ENCODE measurements at regions of chr9 and their contacts with region 1.

Region 1: GRCh38 chr9:70111042-70111602 is 67.5 kb downstream of the MAMDC2 start:
- DNase-seq: peak; percentile 78
- ATAC-seq: peak; percentile 55
- H3K4me3 Mint-ChIP-seq: no peak overlapping the region
- H3K27ac Mint-ChIP-seq: no peak overlapping the region
- H3K4me1 Mint-ChIP-seq: peaks cover 12% of the 10 kb centered on the region
- H3K27me3 Mint-ChIP-seq: peaks cover 13% of the 10 kb centered on the region

Region 2: DNA sequence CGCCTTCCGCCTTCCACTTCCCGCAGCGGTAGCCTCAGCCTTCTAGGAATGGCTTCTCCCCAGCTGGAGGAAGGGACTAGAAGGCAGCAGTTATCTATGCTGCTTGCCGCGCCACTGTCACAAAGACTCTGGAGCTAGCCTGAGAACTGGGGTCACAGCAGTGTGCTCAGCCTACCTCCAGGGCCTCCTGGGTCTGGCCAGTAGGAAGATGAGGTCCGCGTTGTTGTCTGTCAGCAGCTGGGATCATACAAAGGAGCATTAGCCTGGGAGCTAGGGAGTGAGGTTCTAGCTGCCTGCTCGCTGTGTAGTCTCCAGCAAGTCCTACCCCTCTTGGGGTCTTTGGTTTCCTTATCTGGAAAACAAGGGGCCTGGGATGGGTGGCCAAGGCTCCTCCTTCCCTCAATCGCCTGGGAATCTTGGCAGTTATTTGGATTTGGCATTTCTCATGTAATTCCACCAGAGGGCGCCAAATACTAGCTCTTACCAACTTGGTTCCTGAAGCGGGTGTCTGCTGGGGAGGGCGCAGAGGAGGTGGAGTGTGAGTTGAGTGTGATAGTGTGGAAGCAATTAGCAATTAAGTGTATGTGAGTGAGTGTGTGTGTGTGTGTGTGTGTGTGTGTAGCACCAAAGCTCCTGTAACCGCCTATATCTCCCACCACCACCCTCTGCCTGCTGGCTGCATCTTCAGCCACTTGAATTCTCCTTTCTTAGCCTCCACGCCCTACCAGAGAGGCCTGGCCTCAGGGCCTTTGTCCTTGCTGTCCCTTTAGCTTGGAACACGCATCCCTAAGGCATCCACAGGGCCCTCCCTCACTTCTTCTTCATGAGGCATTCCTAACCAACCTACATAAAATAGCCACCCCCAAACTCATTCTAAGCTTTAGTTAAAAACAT is 689.0 kb before region 1 on chr9:
- CTCF ChIA-PET with region 1: interaction called, 3 read pairs
- POLR2A ChIA-PET with region 1: no interaction called
- intact Hi-C with region 1: loop called in 1 of 2 experiments (anchors 5 kb)
- DNase-seq: peak; percentile 65
- ATAC-seq: peak; percentile 50
- H3K4me3 Mint-ChIP-seq: no peak overlapping the region
- H3K27ac Mint-ChIP-seq: no peak overlapping the region
- H3K4me1 Mint-ChIP-seq: no peaks in the 10 kb centered on the region
- H3K27me3 Mint-ChIP-seq: peaks cover 17% of the 10 kb centered on the region

Region 3: GRCh38 chr9:69949396-69949795 is 161.7 kb before region 1 on chr9:
- CTCF ChIA-PET with region 1: no interaction called
- POLR2A ChIA-PET with region 1: no interaction called
- intact Hi-C with region 1: no loop called
- DNase-seq: no peak
- ATAC-seq: no peak
- H3K4me3 Mint-ChIP-seq: no peak overlapping the region
- H3K27ac Mint-ChIP-seq: no peak overlapping the region
- H3K4me1 Mint-ChIP-seq: no peaks in the 10 kb centered on the region
- H3K27me3 Mint-ChIP-seq: peaks cover 28% of the 10 kb centered on the region

Region 4: DNA sequence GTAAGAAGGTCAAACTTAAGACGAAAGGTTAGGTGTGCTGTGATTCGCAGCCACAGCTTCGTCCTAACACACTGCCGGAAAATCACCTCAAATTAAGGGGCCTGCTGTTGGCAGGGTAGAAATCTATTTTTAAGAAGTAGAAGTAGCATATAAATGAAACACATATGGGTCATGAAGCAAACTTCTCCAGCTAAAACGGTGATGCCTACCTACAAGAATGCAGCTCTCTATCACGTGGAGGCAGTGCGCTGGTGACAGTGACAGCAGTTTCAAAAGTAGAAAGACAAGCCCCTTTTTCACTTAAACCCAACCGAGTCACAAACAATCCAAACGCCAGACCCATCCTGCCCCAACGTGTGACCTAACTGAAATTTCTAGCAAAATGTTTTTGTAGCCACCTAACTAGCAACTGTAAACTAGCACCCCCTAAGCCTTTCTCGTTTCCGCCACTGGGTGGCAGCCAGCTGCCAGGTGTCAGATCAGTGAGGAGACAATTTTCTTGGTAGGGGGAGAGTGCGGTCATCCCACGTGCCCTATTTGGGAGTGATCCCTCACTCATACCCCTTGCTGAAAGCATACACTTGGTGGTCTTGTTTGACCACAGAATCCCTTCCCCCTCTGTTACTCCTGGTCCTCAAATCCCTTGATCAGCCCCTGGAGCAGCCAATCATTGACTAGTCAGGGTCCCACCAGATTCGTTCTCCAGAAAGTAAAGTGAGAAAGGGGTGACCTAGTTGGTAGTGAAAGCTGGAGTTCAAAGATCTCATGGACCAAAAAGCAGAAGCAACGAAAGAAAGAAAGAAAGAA is 139.3 kb before region 1 on chr9:
- CTCF ChIA-PET with region 1: interaction called, 39 read pairs
- POLR2A ChIA-PET with region 1: no interaction called
- intact Hi-C with region 1: loop called (anchors 1 kb)
- DNase-seq: peak; percentile 75
- ATAC-seq: peak; percentile 39
- H3K4me3 Mint-ChIP-seq: no peak overlapping the region
- H3K27ac Mint-ChIP-seq: no peak overlapping the region
- H3K4me1 Mint-ChIP-seq: no peaks in the 10 kb centered on the region
- H3K27me3 Mint-ChIP-seq: peaks cover 16% of the 10 kb centered on the region

Region 5: GRCh38 chr9:70094747-70095146 is 16.4 kb before region 1 on chr9:
- CTCF ChIA-PET with region 1: interaction called, 20 read pairs
- POLR2A ChIA-PET with region 1: no interaction called
- intact Hi-C with region 1: no loop called
- DNase-seq: no peak
- ATAC-seq: no peak
- H3K4me3 Mint-ChIP-seq: no peak overlapping the region
- H3K27ac Mint-ChIP-seq: no peak overlapping the region
- H3K4me1 Mint-ChIP-seq: no peaks in the 10 kb centered on the region
- H3K27me3 Mint-ChIP-seq: peaks cover 9% of the 10 kb centered on the region